ENCODE measurements at regions of chr10 and their contacts with region 1.

Region 1: DNA sequence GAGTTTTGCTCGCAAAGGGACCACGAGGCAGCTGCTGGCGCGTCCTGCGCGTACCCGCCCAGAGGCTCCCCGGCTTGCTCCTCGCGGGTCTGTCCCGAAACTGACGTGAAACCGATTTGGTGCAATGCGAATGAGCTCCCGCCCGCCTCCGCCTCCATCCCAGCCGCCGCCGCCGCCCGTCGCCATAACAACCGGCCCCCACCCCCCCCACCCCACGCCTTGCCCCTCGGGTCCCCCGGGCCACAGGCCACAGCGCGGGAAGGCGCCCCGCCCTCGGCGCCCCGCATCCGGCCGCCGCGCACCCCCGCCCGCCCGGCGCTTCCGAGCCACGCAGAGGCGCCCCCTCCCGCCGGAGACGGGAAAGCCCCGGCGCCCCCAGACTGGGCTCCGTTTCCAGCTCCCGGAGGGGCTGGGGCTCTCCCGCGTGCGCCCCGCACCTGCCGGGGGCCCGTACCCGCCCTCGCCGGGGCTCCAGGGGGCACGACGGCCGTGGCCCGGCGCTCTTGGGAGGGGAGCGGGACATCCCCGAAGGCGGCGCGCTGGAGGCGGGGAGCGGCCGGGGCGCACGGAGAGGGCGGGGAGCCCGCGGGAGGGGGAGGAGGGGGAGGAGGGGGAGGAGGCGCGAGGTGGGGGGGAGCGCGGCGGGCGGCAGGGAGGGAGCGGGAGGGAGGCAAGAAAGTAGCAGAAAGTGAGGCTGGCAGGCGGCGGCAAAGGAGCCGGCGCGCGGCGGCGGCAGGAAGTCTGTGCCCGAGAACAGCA is at the start of gene CAMK1D:
- DNase-seq: peak; percentile 82
- H3K4me3 Mint-ChIP-seq: peak within 1 kb of the TSS; percentile 89
- H3K27ac Mint-ChIP-seq: peak within 1 kb of the TSS; percentile 90
- H3K4me1 Mint-ChIP-seq: peaks cover 21% of the 10 kb centered on the region
- H3K27me3 Mint-ChIP-seq: peaks cover 43% of the 10 kb centered on the region
- total RNA-seq, gene CAMK1D: 5.7 and 6.1 TPM in 2 replicates

Region 2: GRCh38 chr10:11539191-11539868 is 809.7 kb before region 1 on chr10:
- intact Hi-C with region 1: no loop called
- DNase-seq: no peak
- H3K4me3 Mint-ChIP-seq: no peak overlapping the region
- H3K27ac Mint-ChIP-seq: no peak overlapping the region
- H3K4me1 Mint-ChIP-seq: peaks cover 5% of the 10 kb centered on the region
- H3K27me3 Mint-ChIP-seq: peaks cover 36% of the 10 kb centered on the region

Region 3: GRCh38 chr10:12264204-12264940 is 84.7 kb before region 1 on chr10:
- intact Hi-C with region 1: loop called (anchors 2 kb)
- DNase-seq: peak; percentile 56
- H3K4me3 Mint-ChIP-seq: peak overlapping the region; percentile 75
- H3K27ac Mint-ChIP-seq: peak overlapping the region; percentile 85
- H3K4me1 Mint-ChIP-seq: peaks cover 17% of the 10 kb centered on the region
- H3K27me3 Mint-ChIP-seq: no peaks in the 10 kb centered on the region

Region 4: GRCh38 chr10:12369982-12370381 is 20.9 kb after region 1 on chr10:
- intact Hi-C with region 1: loop called (anchors 1 kb)
- DNase-seq: no peak
- H3K4me3 Mint-ChIP-seq: no peak overlapping the region
- H3K27ac Mint-ChIP-seq: no peak overlapping the region
- H3K4me1 Mint-ChIP-seq: peaks cover 14% of the 10 kb centered on the region
- H3K27me3 Mint-ChIP-seq: no peaks in the 10 kb centered on the region

Region 5: GRCh38 chr10:12412666-12413368 is 63.8 kb after region 1 on chr10:
- intact Hi-C with region 1: loop called (anchors 5 kb)
- DNase-seq: peak; percentile 26
- H3K4me3 Mint-ChIP-seq: no peak overlapping the region
- H3K27ac Mint-ChIP-seq: no peak overlapping the region
- H3K4me1 Mint-ChIP-seq: peaks cover 16% of the 10 kb centered on the region
- H3K27me3 Mint-ChIP-seq: peaks cover 3% of the 10 kb centered on the region

Region 6: DNA sequence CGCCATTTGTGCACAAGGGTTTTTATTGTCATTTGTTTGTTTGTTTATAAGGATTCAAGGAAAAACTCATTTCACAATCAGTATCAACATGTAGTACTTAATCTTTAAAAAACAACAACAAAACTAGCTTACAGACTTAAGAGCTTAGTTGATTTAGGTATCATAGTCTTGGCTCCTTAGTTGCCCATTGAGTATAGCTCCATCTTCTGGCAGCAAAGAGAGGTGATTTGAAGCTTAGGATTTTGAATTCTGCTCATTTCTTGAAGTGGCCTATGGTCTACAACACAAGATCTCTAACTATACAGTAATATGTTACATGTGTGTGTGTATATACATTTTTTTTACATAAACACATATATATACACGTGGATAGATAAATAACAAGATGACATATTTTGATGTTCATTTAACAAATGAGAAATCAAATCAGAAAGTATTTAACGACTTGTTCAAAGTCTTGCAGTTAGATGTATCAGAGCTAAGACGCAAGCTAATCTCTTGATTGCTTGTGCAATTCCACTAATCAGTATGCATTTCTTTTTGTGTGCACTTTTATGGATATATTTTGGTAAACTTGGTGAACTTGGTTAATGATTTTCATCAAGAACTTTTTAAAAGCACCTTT is 307.6 kb after region 1 on chr10:
- intact Hi-C with region 1: loop called (anchors 10 kb)
- DNase-seq: no peak
- H3K4me3 Mint-ChIP-seq: no peak overlapping the region
- H3K27ac Mint-ChIP-seq: no peak overlapping the region
- H3K4me1 Mint-ChIP-seq: peaks cover 18% of the 10 kb centered on the region
- H3K27me3 Mint-ChIP-seq: no peaks in the 10 kb centered on the region